ENCODE measurements at regions of chr17 and their contacts with region 1.

Region 1: GRCh38 chr17:48374650-48375230 is 55.3 kb downstream of the SKAP1 start:
- DNase-seq: no peak
- ATAC-seq: peak; percentile 50
- H3K4me3 Mint-ChIP-seq: no peak overlapping the region
- H3K27ac Mint-ChIP-seq: no peak overlapping the region
- H3K4me1 Mint-ChIP-seq: peaks cover 8% of the 10 kb centered on the region
- H3K27me3 Mint-ChIP-seq: no peaks in the 10 kb centered on the region

Region 2: DNA sequence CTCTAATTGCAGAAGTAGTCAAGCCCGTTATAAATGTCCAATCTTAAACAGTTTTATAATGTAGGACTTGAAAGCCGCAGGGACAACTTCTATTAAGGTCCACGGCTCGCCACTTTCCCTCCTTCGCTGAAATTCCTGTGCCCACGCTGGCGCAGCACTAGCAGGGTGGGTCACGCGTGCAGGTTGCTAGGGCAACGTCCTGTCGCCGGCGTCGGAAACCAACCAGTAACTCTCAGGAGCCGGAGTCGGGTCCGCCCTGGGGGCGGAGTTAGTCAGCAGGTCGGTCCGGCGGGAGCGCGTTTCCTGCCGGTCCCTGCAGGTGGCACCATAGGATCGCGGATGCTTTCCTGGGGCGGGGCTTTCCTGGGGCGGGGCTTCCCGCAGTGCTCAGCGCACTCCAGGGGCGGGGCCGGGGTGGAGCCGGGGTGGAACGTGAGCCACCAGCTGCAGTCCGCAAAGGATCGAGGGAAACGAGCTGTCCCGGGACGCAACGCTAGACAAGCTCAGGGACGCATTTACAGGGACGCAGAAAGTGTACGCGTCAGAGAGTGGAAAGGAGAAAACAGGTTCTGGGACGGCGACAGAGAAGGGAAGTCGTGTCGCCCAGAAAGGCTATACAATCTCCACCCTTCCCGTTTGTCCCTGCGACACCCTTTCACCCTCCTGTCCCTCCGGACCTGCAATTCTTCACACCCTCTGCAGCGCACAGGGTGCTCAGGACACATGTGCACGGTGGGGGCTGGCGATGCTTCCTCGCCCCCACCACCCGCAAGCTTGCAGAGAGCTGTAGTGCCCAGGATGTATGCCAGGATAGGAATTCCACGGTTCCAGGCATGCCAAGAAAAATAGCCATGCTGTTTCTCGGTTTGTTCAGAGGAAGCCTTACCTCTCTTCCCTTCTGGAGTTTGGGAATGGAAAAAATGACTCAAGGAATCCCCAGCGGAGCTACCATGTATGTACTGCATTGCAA is 349.5 kb before region 1 on chr17:
- POLR2A ChIA-PET with region 1: no interaction called
- DNase-seq: peak; percentile 96
- ATAC-seq: peak; percentile 88
- H3K4me3 Mint-ChIP-seq: peak overlapping the region; percentile 85
- H3K27ac Mint-ChIP-seq: peak overlapping the region; percentile 69
- H3K4me1 Mint-ChIP-seq: peaks cover 24% of the 10 kb centered on the region
- H3K27me3 Mint-ChIP-seq: peaks cover 24% of the 10 kb centered on the region

Region 3: GRCh38 chr17:48344246-48344645 is 30.5 kb before region 1 on chr17:
- POLR2A ChIA-PET with region 1: no interaction called
- DNase-seq: no peak
- ATAC-seq: no peak
- H3K4me3 Mint-ChIP-seq: no peak overlapping the region
- H3K27ac Mint-ChIP-seq: no peak overlapping the region
- H3K4me1 Mint-ChIP-seq: peaks cover 9% of the 10 kb centered on the region
- H3K27me3 Mint-ChIP-seq: no peaks in the 10 kb centered on the region

Region 4: DNA sequence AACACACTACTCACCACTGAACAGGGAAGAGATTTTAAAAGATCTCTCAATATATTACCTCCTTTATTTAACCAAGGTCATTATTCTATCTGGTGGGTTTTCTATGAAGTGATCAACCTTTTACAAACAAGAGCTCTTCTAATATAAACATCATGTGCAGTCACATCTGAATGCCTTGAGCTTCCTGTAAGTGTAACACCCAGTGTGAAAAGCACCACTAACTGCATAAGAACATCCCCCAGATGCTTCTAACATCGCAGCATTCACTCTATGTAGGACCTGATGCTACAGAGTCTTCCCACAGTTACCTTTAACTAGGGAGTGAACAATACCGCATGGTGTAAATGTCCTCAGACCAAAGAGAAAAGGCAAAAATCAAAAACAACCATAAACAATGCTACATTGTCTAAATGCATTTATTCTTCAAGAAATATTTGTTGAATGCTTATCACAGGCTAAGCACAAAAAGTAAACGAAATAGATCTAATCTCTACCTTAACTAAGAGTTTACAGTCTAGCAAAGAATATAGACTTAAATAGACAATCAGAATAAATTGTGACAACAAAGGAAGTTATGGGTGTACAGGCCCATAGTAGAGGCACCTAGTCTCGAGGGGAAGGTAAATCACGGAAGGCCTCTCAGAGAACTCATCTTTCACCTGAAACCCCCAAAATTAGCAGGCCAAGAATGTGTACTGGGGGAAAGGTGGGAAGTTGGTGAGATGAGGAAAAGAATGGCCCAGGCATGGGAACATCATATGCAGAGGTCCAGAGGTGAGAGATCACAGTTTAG is 39.1 kb after region 1 on chr17:
- POLR2A ChIA-PET with region 1: interaction called, 11 read pairs
- DNase-seq: no peak
- ATAC-seq: peak; percentile 69
- H3K4me3 Mint-ChIP-seq: peak overlapping the region; percentile 62
- H3K27ac Mint-ChIP-seq: peak overlapping the region; percentile 72
- H3K4me1 Mint-ChIP-seq: peaks cover 59% of the 10 kb centered on the region
- H3K27me3 Mint-ChIP-seq: no peaks in the 10 kb centered on the region

Region 5: DNA sequence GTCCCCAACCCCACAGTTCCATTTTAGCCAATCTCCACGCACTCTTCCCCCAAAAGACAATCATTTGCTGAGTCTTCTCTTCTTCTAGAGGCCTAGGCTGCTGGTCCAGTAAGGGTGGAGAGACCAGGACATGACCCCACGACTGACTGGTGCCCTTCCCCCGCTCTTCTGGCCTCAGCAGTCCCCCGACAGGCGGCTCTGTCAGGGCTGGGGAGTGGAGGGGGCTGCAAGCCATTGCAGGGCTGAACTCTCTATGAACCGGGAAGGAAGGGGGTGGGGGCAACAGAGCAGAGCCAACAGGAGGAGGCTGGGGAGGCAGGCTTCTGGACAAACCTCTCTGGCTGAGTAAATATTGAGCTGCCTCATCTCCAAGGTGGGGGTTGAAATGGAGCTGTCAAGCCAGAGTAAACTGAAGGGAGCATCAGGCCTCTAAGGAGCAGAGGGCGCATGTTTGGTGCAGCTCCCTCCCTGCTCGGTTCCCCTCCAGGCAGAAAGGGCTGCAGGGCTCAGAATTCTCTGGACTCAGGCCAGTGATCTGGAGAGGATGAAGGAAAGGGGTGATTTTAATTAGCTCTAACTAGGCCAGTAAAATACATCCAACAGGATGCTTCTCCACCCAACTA is 147.4 kb after region 1 on chr17:
- POLR2A ChIA-PET with region 1: no interaction called
- DNase-seq: no peak
- ATAC-seq: no peak
- H3K4me3 Mint-ChIP-seq: no peak overlapping the region
- H3K27ac Mint-ChIP-seq: no peak overlapping the region
- H3K4me1 Mint-ChIP-seq: peaks cover 12% of the 10 kb centered on the region
- H3K27me3 Mint-ChIP-seq: peaks cover 65% of the 10 kb centered on the region

Measured in activated naive CD8-positive, alpha-beta T cell treated with anti-CD3 and anti-CD28 coated beads, Interleukin-2, amount 10 ng/mL, durations not matched to agents 7 days and 5 days (primary cell).